Naive thymus-derived CD4-positive, alpha-beta T cell (primary cell): ENCODE measurements at regions of chr18 and their contacts with region 1.

Region 1: GRCh38 chr18:23629444-23629946 is 33.2 kb downstream of the ANKRD29 start:
- DNase-seq: no peak
- ATAC-seq: no peak
- H3K4me3 ChIP-seq: no peak overlapping the region
- H3K4me3 Mint-ChIP-seq: no peak overlapping the region
- H3K27ac ChIP-seq: no peak overlapping the region
- H3K27ac Mint-ChIP-seq: peak overlapping the region in 1 of 9 donors; percentile 45
- H3K4me1 ChIP-seq: no peaks in the 10 kb centered on the region
- H3K4me1 Mint-ChIP-seq: peaks cover 0 to 21% (median 4%) of the 10 kb centered on the region in 7 donors
- H3K27me3 ChIP-seq: no peaks in the 10 kb centered on the region
- H3K27me3 Mint-ChIP-seq: peaks cover 0 to 21% (median 4%) of the 10 kb centered on the region in 5 donors

Region 2: GRCh38 chr18:23563377-23564043 is 66.0 kb before region 1 on chr18:
- CTCF ChIA-PET with region 1: no interaction called
- POLR2A ChIA-PET with region 1: no interaction called
- intact Hi-C with region 1: no loop called
- DNase-seq: no peak
- ATAC-seq: peak; percentile 71
- H3K4me3 ChIP-seq: no peak overlapping the region
- H3K4me3 Mint-ChIP-seq: no peak overlapping the region
- H3K27ac ChIP-seq: no peak overlapping the region
- H3K27ac Mint-ChIP-seq: no peak overlapping the region
- H3K4me1 ChIP-seq: peaks cover 0 to 5% of the 10 kb centered on the region in 2 donors
- H3K4me1 Mint-ChIP-seq: peaks cover 0 to 6% (median 0%) of the 10 kb centered on the region in 7 donors
- H3K27me3 ChIP-seq: no peaks in the 10 kb centered on the region
- H3K27me3 Mint-ChIP-seq: no peaks in the 10 kb centered on the region

Region 3: DNA sequence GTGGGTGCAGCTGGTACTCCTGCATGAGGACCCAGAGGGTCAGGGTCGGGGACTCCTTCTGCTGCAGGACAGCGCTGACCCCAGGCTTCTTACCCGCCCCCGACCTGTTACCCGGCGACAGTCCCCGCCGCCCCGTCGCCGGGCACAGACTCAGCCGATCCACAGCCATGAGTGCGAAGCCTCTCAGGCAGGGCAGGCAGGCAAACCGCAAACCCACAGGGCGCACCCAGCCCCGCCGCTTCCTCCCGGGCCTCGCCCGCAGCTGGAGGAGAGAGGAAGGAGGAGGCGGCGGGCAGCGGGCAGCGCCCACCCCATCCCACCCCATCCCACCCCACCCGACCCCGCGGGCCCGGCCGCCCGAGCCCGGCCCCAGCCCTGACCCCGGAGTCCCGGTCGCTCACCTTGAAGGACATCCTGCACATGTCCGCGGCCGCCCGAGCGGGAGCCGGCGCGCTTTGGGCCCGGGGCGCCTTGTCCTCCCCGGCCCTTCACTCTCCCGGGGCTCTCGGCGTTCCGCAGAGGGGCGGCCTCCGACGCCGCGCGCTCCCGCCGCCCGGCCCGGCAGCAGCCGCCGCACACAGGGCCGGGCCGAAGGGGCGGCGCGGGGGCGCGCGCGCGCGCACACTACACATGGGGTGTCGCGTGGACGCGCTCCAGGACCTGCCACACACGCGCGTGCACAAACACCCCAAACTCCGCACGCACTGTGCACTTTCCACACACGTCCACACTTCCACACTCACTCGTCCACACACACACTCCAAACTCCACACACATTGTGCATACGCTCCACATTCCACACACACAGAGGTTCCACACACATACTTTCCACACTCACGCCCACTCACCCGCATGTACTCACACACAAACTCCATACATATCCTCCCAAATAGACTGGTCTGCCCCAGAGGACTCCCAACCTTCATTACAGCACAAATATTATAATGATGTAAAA is 33.1 kb after region 1 on chr18 and contains the start of gene ANKRD29:
- CTCF ChIA-PET with region 1: no interaction called
- POLR2A ChIA-PET with region 1: no interaction called
- intact Hi-C with region 1: loop called (anchors 5 kb)
- DNase-seq: peak; percentile 27 to 61 (median 53)
- ATAC-seq: peak; percentile 83
- H3K4me3 ChIP-seq: peak within 1 kb of the TSS; percentile 65
- H3K4me3 Mint-ChIP-seq: peak within 1 kb of the TSS; percentile 85 to 97 (median 90)
- H3K27ac ChIP-seq: no peak within 1 kb of the TSS
- H3K27ac Mint-ChIP-seq: peak within 1 kb of the TSS; percentile 20 to 90 (median 79)
- H3K4me1 ChIP-seq: peaks cover 17 to 19% of the 10 kb centered on the region in 2 donors
- H3K4me1 Mint-ChIP-seq: peaks cover 19 to 39% (median 27%) of the 10 kb centered on the region in 7 donors
- H3K27me3 ChIP-seq: peaks cover 0 to 14% of the 10 kb centered on the region in 2 donors
- H3K27me3 Mint-ChIP-seq: peaks cover 21 to 79% (median 29%) of the 10 kb centered on the region in 5 donors
- total RNA-seq, gene ANKRD29: 0.11 to 0.24 (median 0.17) TPM in 3 of 5 experiments, not detected in the others